K562 (cell line): ENCODE measurements at regions of chr1 and their contacts with region 1.

Region 1: DNA sequence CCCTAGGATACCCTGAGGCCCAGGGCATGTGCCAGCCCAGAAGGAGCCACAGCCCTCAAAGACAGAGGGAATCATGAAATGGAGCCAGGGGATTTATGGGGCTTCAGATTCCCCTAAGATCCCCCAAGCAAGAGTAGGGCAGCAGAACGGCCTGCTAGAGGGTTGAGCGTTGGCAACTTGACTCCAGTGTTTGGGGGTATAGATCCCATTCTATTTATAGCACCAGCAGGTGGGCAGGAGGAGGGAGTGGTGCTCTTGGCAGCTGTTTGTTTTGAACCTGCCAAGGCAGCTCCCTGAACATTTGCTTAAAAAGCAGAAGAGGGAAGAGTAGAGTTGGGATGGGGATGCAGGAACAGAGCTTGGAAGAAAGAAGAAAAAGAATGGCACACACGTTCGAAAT is 33.7 kb downstream of the GLUL start:
- DNase-seq: no peak
- ATAC-seq: no peak
- H3K4me3 ChIP-seq: no peak overlapping the region
- H3K27ac ChIP-seq: no peak overlapping the region
- H3K4me1 ChIP-seq: peaks cover 13 to 33% of the 10 kb centered on the region in 2 experiments
- H3K27me3 ChIP-seq: no peaks in the 10 kb centered on the region
- CTCF ChIP-seq: no peak
- EP300 ChIP-seq: no peak
- POLR2A ChIP-seq: no peak
- RAD21 ChIP-seq: no peak

Region 2: GRCh38 chr1:182113879-182114626 is 243.9 kb before region 1 on chr1:
- CTCF ChIA-PET with region 1: no interaction called
- POLR2A ChIA-PET with region 1: no interaction called
- in situ Hi-C with region 1: no loop called
- intact Hi-C with region 1: no loop called
- DNase-seq: no peak
- ATAC-seq: peak; percentile 47
- H3K4me3 ChIP-seq: no peak overlapping the region
- H3K27ac ChIP-seq: no peak overlapping the region
- H3K4me1 ChIP-seq: peaks cover 0 to 3% of the 10 kb centered on the region in 2 experiments; a peak in 3 of 5 replicates
- H3K27me3 ChIP-seq: peaks cover 21 to 46% of the 10 kb centered on the region in 2 experiments
- CTCF ChIP-seq: no peak
- EP300 ChIP-seq: no peak
- POLR2A ChIP-seq: no peak
- RAD21 ChIP-seq: no peak

Region 3: GRCh38 chr1:182337736-182338571 is 20.0 kb before region 1 on chr1:
- CTCF ChIA-PET with region 1: no interaction called
- POLR2A ChIA-PET with region 1: interaction called, 5 read pairs
- in situ Hi-C with region 1: no loop called
- intact Hi-C with region 1: loop called (anchors 2 kb)
- DNase-seq: peak; percentile 87 to 93 (median 90)
- ATAC-seq: peak; percentile 80
- H3K4me3 ChIP-seq: no peak overlapping the region
- H3K27ac ChIP-seq: peak overlapping the region; percentile 83
- H3K4me1 ChIP-seq: peaks cover 36 to 65% of the 10 kb centered on the region in 2 experiments
- H3K27me3 ChIP-seq: no peaks in the 10 kb centered on the region
- CTCF ChIP-seq: no peak
- EP300 ChIP-seq: peak; percentile 100
- POLR2A ChIP-seq: no peak; the same call in 1 of the 2 replicates
- RAD21 ChIP-seq: peak; percentile 15 to 48; a peak in 3 of 4 replicates